SK-N-SH (cell line): ENCODE measurements at regions of chr6 and their contacts with region 1.

Region 1: GRCh38 chr6:39088331-39088730 is 26.7 kb downstream of the SAYSD1 start:
- DNase-seq: no peak
- H3K4me3 ChIP-seq: no peak overlapping the region
- H3K27ac ChIP-seq: no peak overlapping the region
- H3K4me1 ChIP-seq: peaks cover 0 to 10% of the 10 kb centered on the region in 2 experiments; a peak in 1 of 4 replicates
- H3K27me3 ChIP-seq: no peaks in the 10 kb centered on the region
- CTCF ChIP-seq: peak; percentile 29
- EP300 ChIP-seq: no peak
- RAD21 ChIP-seq: peak; percentile 27

Region 2: DNA sequence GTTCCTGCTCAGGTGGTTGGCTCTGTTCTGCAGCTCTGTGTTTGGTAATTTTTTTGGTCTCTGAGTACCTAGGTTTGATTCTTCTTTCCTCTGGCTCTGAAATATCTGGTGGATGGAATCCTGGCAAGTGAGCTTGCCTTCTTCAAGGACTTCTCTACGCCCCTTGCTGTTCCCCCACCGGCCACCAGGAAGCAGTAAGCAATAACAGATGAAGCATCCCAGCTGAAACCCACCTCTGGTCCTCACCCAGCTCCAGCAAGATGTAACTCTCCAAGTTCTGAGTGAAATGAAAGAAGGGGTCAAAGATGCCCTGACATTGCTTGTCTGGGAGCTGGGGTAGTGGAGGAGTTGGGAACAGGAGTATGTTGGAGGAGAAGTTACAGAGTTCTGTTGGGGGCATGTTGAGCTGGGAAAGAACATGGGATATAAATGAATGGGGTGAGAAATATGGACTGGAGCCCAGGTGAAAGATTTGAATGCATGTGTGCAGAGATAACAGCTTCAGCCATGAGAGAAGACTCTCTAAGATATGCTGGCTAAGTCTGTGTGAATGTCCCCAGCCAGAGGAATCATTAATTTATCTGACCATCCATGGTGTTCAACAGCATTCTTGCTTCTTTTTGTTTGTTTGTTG is 91.1 kb before region 1 on chr6:
- CTCF ChIA-PET with region 1: interaction called, 52 read pairs
- POLR2A ChIA-PET with region 1: no interaction called
- DNase-seq: peak; percentile 49
- H3K4me3 ChIP-seq: no peak overlapping the region
- H3K27ac ChIP-seq: no peak overlapping the region
- H3K4me1 ChIP-seq: no peaks in the 10 kb centered on the region
- H3K27me3 ChIP-seq: no peaks in the 10 kb centered on the region
- CTCF ChIP-seq: peak; percentile 61
- EP300 ChIP-seq: no peak
- RAD21 ChIP-seq: peak; percentile 91

Region 3: GRCh38 chr6:39496915-39497314 is 408.6 kb after region 1 on chr6:
- CTCF ChIA-PET with region 1: no interaction called
- POLR2A ChIA-PET with region 1: no interaction called
- DNase-seq: no peak
- H3K4me3 ChIP-seq: no peak overlapping the region
- H3K27ac ChIP-seq: no peak overlapping the region
- H3K4me1 ChIP-seq: no peaks in the 10 kb centered on the region
- H3K27me3 ChIP-seq: no peaks in the 10 kb centered on the region
- CTCF ChIP-seq: no peak
- EP300 ChIP-seq: no peak
- RAD21 ChIP-seq: no peak